Dendritic cell treated with granulocyte-macrophage colony-stimulating factor and Interleukin-4, amounts not matched to agents 40 ng/mL and 50 ng/mL, for 4 days (primary cell): ENCODE measurements at regions of chr2 and their contacts with region 1.

Region 1: DNA sequence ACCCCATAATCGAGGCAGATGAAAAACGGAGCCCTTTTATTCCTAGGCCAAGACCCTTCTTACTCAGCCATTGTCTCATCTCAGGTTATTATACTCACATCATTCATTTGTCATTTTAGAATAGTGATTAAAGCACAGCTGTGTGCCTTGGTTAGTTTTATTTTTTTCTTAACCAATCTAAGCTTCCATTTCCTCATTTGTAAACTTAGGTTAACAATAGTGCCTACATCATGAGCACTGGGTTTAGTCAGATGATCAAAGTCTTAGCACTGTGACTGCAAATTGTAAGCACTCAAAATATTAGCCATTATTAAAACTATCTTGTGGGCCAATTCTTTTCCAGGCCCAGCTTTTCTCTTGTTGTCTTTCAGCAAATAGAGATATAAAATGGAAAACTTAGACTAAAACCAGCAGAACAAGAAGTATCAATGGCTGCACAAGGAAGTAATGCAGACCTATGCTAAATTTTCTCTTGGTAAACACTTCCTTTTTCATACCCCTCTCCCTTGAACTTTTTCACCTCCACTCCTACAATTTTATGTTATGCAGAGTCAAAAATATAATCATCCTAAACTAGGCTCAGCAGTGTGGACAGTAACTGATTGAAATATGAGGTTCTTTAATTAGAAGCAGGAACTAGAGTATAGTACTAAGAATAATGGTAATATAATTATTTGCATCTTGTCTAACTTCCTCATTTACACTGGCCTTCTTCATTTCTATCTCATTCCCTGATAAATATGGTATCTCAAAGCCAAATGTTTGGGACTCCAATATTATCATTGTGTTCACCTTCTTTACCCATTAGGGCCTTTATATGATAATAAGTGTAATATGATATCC is 21.5 kb upstream of the GALNT3 start:
- H3K4me3 Mint-ChIP-seq: no peak overlapping the region
- H3K27ac Mint-ChIP-seq: peak overlapping the region; percentile 73
- H3K4me1 Mint-ChIP-seq: peaks cover 43% of the 10 kb centered on the region
- H3K27me3 Mint-ChIP-seq: no peaks in the 10 kb centered on the region

Region 2: DNA sequence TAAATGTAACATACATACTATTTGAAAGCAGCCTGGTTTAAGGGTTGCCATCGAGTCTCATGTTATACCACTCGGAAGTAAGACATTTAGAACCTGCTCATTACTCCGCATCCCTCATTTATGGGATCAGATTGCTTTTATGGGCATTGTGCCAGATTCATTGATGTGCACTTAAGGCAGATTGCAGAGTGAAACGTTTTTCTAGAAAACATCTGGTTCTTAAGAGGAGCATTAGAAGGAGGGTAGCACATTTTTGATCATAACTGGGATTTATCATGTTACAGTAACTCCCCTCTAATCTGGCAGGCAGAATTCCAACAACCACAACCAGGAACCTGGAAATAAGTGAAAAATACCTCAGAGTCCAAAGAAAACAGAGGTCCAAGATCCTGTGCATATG is 52.7 kb after region 1 on chr2:
- intact Hi-C with region 1: loop called (anchors 5 kb)
- H3K4me3 Mint-ChIP-seq: no peak overlapping the region
- H3K27ac Mint-ChIP-seq: no peak overlapping the region
- H3K4me1 Mint-ChIP-seq: peaks cover 7% of the 10 kb centered on the region
- H3K27me3 Mint-ChIP-seq: no peaks in the 10 kb centered on the region